Activated CD8-positive, alpha-beta T cell treated with anti-CD3 and anti-CD28 coated beads, Interleukin-2, amount 10 ng/mL, durations not matched to agents 7 days and 5 days (primary cell): ENCODE measurements at regions of chr20 and their contacts with region 1.

Region 1: DNA sequence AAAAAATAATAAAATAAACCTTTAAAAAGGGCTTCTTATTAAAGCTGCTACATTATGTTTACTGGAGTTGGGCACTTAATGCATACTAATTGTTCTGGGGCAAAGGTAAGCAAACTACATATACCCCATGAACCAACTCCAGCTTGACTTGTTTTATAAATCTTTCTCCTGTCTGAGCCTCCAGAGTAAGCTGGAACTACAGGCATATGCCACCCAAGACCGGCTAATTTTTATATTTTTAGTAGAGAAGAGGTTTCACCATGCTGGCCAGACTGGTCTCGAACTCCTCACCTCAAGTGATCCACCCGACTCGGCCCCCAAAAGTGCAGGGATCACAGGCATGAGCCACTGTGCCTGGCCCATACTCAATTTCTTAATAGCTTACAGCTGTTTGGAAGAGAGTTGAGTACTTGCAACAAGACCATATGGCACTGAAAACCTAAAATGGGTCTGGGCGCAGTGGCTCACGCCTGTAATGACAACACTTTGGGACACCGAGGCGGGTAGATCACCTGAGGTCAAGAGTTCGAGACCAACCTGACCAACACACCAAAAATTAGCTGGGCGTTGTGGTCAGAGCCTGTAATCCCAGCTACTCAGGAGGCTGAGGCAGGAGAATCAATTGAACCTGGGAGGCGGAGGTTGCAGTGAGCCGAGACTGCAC is 19.9 kb downstream of the ROMO1 start:
- DNase-seq: no peak
- ATAC-seq: no peak
- H3K4me3 Mint-ChIP-seq: no peak overlapping the region
- H3K27ac Mint-ChIP-seq: no peak overlapping the region
- H3K4me1 Mint-ChIP-seq: peaks cover 31% of the 10 kb centered on the region
- H3K27me3 Mint-ChIP-seq: no peaks in the 10 kb centered on the region

Region 2: DNA sequence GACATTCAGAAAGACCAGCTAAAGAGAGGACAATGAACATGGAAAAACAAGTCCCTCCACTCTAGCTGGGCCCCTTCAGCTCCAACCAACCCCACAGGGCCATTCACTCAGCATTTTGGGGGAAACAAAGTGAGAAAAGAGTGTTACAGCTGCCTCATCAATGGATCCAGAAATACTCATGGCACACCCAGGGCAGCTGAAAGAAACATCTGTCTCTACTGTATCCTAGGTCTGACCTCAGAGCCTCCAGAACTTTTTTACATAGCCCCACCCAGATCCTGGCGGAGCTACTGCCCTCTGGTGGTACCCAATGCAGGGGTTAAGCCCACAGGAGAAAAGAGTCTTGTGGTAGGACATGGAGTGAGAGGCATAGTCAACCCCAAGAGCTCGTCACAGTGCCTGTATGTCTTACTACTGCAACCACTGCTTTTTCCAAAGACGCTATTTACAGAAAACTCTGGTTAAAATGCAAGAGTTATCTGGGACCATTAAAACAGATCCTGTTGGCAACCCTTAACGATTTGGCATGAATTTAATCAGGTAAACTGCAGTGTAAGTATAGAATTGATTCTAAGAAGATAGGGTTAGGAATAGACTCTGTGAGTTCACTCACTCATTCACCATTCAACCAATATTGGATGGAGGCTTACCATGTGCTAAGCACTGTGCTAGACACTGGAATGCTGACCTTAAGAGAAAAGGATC is 389.5 kb before region 1 on chr20:
- CTCF ChIA-PET with region 1: no interaction called
- POLR2A ChIA-PET with region 1: no interaction called
- DNase-seq: peak; percentile 60
- ATAC-seq: peak; percentile 90
- H3K4me3 Mint-ChIP-seq: no peak overlapping the region
- H3K27ac Mint-ChIP-seq: no peak overlapping the region
- H3K4me1 Mint-ChIP-seq: peaks cover 3% of the 10 kb centered on the region
- H3K27me3 Mint-ChIP-seq: no peaks in the 10 kb centered on the region

Region 3: GRCh38 chr20:35735828-35736470 is 16.8 kb after region 1 on chr20:
- CTCF ChIA-PET with region 1: interaction called, 3 read pairs
- POLR2A ChIA-PET with region 1: interaction called, 16 read pairs
- DNase-seq: no peak
- ATAC-seq: no peak
- H3K4me3 Mint-ChIP-seq: peak overlapping the region; percentile 56
- H3K27ac Mint-ChIP-seq: peak overlapping the region; percentile 53
- H3K4me1 Mint-ChIP-seq: peaks cover 64% of the 10 kb centered on the region
- H3K27me3 Mint-ChIP-seq: no peaks in the 10 kb centered on the region